Gastrocnemius medialis (tissue), 4 donors: ENCODE measurements at regions of chr1 and their contacts with region 1.

Region 1: DNA sequence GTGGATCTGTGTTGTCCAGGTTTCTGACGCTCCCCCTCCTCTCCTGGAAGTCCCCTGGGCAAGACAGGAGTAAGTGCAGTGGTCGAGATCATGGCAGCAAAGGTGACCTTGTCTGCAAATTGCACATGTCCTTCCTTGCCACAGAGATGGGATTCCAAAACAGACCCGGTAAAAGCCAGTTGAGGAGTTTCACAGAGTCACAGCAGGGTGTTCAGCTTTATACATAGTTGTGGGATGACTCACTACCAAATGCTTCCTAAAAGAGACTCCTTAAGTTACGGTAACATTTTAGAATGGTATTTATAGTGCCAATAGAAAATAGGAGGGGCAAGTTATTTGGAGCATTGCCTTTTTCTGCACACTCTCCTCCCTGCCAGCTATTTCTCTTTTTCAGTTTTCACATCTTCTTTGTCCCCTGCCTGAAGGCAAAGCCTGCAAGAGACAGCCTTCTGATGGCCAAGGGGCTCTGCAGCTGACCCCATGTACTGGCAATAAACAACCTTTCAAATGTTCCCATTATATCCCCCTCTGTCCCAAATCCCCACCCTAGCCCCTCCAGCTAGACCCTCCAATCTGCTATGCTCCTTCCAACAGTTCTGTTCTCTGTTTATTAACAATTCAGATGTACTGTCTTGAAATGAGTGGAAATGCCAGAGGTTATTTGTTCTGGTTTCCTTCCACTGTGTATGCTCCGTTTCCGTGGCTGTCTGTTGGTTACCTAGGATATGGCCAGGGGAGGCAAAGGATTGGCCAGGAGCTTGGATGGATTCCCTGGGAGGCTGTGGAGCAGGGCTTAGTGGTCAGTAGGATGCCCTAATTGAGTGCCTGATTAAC is 115.0 kb downstream of the TGFB2 start:
- DNase-seq: no peak
- ATAC-seq: peak; percentile 53 to 74
- H3K4me3 ChIP-seq: peak overlapping the region in 1 of 4 donors; percentile 23
- H3K27ac ChIP-seq: peak overlapping the region; percentile 72 to 90 (median 84)
- H3K4me1 ChIP-seq: peaks cover 55 to 57% of the 10 kb centered on the region in 2 donors
- H3K27me3 ChIP-seq: no peaks in the 10 kb centered on the region
- CTCF ChIP-seq: no peak
- POLR2A ChIP-seq: no peak

Region 2: GRCh38 chr1:216815260-216816131 is 1644.6 kb before region 1 on chr1:
- in situ Hi-C with region 1: no loop called
- intact Hi-C with region 1: loop called (anchors 5 kb)
- DNase-seq: peak; percentile 84 to 88
- ATAC-seq: peak; percentile 92 to 93
- H3K4me3 ChIP-seq: peak overlapping the region in 2 of 4 donors; percentile 11 to 17
- H3K27ac ChIP-seq: peak overlapping the region; percentile 82 to 89 (median 86)
- H3K4me1 ChIP-seq: peaks cover 25 to 58% of the 10 kb centered on the region in 2 donors
- H3K27me3 ChIP-seq: no peaks in the 10 kb centered on the region
- CTCF ChIP-seq: no peak
- POLR2A ChIP-seq: no peak

Region 3: DNA sequence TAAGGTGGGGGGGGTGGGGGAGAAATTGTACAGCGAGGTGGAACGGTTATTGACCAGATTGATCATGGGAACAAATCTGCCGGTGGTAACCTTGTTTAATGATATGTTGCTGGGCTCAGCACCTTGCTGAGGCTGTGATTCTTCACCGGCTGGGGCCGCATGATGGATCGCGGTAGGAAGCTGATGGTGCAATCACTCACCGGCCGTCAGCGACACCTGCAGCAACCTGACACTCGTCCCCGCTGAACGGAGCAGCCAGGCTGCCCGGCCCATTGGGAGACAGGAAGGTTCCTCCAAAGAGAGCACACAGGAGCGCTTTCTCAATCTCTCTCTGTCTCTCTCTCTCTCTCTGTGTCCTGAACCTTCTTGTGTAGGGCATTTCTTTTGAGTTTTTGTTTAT is 303.5 kb before region 1 on chr1:
- in situ Hi-C with region 1: no loop called
- intact Hi-C with region 1: no loop called
- DNase-seq: no peak
- ATAC-seq: no peak
- H3K4me3 ChIP-seq: no peak overlapping the region
- H3K27ac ChIP-seq: no peak overlapping the region
- H3K4me1 ChIP-seq: no peaks in the 10 kb centered on the region
- H3K27me3 ChIP-seq: peaks cover 1 to 24% (median 6%) of the 10 kb centered on the region in 3 donors
- CTCF ChIP-seq: no peak
- POLR2A ChIP-seq: no peak

Region 4: DNA sequence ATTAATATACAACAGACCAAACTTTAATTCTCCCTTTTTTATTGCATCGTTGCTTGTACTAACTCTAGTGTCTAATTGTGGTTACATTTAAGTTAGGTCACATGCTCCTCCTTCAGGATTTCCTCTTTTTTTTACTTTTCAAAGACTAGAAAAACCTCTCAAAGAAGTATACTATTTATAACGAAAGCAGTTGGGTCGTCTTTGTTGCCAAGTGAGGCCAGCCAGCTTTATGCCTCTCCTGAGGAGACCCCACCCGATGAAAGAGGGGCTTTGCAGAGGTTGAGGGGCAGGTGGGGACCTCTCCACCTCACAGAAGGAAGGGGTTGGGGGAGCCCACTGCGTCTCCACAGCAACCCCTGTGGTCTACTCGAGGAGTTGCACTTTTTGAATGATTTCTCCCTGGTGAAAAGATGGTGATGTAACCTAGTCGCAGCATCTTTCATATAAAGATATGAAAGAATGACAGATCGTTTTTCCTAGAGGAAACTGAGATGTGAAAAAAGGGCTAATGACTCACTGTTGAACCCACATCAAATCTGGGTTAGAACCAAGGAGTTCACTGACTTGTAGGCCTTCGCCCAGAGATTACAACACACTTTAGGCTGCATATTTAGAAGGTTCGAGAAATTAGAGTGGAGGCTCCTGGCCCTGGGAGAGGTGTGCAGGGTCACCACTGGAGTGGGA is 108.6 kb before region 1 on chr1:
- in situ Hi-C with region 1: loop called in 1 of 4 experiments (anchors 25 kb)
- intact Hi-C with region 1: no loop called
- DNase-seq: peak in 1 of 2 donors; percentile 55
- ATAC-seq: peak; percentile 32 to 48
- H3K4me3 ChIP-seq: peak overlapping the region; percentile 37 to 86 (median 44)
- H3K27ac ChIP-seq: peak overlapping the region; percentile 90 to 94 (median 92)
- H3K4me1 ChIP-seq: peaks cover 65 to 69% of the 10 kb centered on the region in 2 donors
- H3K27me3 ChIP-seq: no peaks in the 10 kb centered on the region
- CTCF ChIP-seq: peak in 4 of 5 experiments; percentile 40 to 58 (median 44)
- POLR2A ChIP-seq: no peak

Region 5: DNA sequence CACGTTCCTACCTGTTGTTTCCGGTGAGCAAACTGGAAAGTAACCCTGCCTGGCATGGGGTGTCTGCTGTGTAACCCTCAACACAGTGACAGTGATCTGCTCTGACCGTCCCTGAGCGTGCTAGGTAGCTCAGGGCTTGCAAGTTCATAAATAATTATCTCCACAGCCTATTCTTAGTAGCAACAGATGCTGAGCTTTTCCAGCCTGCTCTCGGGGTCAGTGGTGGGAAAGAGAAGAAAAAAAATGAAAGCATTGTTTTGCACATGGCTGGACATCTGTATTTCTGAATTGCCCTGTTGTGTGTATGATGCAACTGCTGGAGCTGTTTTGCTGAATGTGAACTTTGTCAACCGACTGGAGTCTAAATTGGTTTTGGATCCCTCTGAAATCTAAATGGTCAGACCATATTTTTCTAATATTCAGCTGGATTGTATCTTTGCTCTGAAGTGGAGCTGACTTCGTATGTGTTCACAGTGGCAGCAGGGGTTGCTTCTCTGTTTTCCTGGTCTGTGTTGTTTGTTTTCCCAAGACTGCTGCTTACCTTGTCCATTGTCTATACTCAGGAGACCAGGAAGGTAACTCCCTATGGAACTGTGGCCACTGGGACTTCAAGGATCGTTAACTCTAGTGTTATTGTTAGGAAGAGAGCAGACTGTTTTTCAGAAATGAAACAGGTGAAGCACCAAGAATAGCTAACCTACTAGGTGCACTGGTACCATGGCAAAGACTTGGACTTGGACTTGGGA is 88.0 kb before region 1 on chr1:
- in situ Hi-C with region 1: loop called in 1 of 4 experiments (anchors 25 kb)
- intact Hi-C with region 1: loop called (anchors 5 kb)
- DNase-seq: no peak
- ATAC-seq: peak; percentile 24 to 60
- H3K4me3 ChIP-seq: peak overlapping the region in 3 of 4 donors; percentile 2 to 22 (median 18)
- H3K27ac ChIP-seq: peak overlapping the region; percentile 69 to 86 (median 78)
- H3K4me1 ChIP-seq: peaks cover 57 to 73% of the 10 kb centered on the region in 2 donors
- H3K27me3 ChIP-seq: no peaks in the 10 kb centered on the region
- CTCF ChIP-seq: no peak
- POLR2A ChIP-seq: no peak